Astrocyte of the cerebellum (primary cell): ENCODE measurements at regions of chr10 and their contacts with region 1.

Region 1: GRCh38 chr10:69065406-69066361 is 22.2 kb upstream of the SRGN start:
- DNase-seq: no peak
- H3K4me3 ChIP-seq: no peak overlapping the region
- CTCF ChIP-seq: no peak

Region 2: DNA sequence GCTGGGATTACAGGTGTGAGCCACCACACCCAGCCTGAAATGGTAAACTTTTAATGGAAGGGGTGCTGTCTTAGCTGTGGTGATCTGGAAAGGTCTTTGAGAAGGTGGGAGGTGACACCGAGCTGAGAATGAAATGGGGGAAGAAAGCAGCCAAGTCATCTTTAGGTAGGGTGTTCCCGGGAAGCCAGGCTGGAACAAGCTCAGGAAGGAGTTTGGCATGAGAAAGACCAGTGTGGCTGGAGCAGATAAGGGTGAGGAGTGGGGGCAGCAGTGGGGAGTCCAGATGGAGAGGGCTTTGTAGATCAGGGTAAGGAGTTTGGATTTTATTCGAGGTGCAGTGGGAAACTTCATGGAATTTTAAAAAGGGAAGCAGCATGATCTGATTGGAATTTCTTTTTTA is 47.1 kb before region 1 on chr10:
- in situ Hi-C with region 1: loop called (anchors 5 kb)
- DNase-seq: no peak
- H3K4me3 ChIP-seq: no peak overlapping the region
- CTCF ChIP-seq: no peak

Region 3: GRCh38 chr10:69101451-69102095 is 35.9 kb after region 1 on chr10:
- in situ Hi-C with region 1: loop called (anchors 5 kb)
- DNase-seq: no peak
- H3K4me3 ChIP-seq: no peak overlapping the region
- CTCF ChIP-seq: no peak